Activated CD4-positive, alpha-beta T cell treated with anti-CD3 and anti-CD28 coated beads for 36 hours (primary cell): ENCODE measurements at regions of chr10 and their contacts with region 1.

Region 1: GRCh38 chr10:103111031-103111917 is 81.8 kb downstream of the NT5C2 start:
- DNase-seq: no peak
- ATAC-seq: no peak
- H3K4me3 Mint-ChIP-seq: no peak overlapping the region
- H3K27ac Mint-ChIP-seq: peak overlapping the region; percentile 83
- H3K4me1 Mint-ChIP-seq: peaks cover 20% of the 10 kb centered on the region
- H3K27me3 Mint-ChIP-seq: no peaks in the 10 kb centered on the region

Region 2: GRCh38 chr10:103547391-103547946 is 436.2 kb after region 1 on chr10:
- CTCF ChIA-PET with region 1: no interaction called
- POLR2A ChIA-PET with region 1: interaction called, 12 read pairs
- intact Hi-C with region 1: no loop called
- DNase-seq: no peak
- ATAC-seq: no peak
- H3K4me3 Mint-ChIP-seq: no peak overlapping the region
- H3K27ac Mint-ChIP-seq: no peak overlapping the region
- H3K4me1 Mint-ChIP-seq: peaks cover 9% of the 10 kb centered on the region
- H3K27me3 Mint-ChIP-seq: peaks cover 3% of the 10 kb centered on the region